Ascending aorta (tissue), 2 donors: ENCODE measurements at regions of chr7 and their contacts with region 1.

Region 1: DNA sequence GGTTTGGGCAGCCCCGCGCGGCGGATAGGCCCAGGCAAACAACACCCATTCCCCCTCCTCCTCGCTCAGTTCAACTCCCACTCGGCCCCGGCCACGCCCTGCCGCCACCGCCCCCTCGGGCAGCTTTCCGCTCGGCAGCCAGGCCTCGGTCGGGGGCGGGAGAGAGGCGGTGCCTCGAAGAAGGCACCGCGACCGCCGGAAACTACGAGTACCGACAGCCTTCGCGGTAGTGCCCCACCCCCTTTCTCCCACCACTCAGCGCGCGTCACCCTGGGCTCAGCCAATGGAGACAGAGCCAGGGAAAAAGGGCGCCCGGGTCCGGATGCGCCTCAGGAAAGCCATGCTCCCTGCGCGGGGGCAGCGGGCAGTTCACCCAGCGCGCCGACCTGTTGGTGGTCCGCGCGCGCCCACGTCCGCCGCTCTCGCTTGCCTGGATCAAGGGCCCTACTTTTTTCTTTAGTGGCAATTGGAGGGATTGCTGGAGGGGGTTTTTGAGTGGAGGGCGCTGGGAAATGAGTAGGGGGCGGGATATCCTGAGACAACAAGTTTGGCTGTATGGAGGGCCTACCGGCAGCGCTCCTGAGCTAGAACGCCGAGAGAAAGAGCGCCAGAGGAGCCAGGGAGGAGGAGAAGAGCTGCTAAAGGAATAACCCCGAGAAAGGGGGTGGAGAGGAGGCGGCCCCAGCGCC is 557 bp upstream of the SP4 start:
- DNase-seq: peak; percentile 95 to 99
- H3K4me3 ChIP-seq: peak overlapping the region; percentile 55 to 87
- H3K27ac ChIP-seq: peak overlapping the region; percentile 97 to 98
- H3K4me1 ChIP-seq: peaks cover 0 to 6% of the 10 kb centered on the region in 2 donors
- H3K27me3 ChIP-seq: no peaks in the 10 kb centered on the region
- CTCF ChIP-seq: peak in 2 of 3 experiments; percentile 4 to 8

Region 2: DNA sequence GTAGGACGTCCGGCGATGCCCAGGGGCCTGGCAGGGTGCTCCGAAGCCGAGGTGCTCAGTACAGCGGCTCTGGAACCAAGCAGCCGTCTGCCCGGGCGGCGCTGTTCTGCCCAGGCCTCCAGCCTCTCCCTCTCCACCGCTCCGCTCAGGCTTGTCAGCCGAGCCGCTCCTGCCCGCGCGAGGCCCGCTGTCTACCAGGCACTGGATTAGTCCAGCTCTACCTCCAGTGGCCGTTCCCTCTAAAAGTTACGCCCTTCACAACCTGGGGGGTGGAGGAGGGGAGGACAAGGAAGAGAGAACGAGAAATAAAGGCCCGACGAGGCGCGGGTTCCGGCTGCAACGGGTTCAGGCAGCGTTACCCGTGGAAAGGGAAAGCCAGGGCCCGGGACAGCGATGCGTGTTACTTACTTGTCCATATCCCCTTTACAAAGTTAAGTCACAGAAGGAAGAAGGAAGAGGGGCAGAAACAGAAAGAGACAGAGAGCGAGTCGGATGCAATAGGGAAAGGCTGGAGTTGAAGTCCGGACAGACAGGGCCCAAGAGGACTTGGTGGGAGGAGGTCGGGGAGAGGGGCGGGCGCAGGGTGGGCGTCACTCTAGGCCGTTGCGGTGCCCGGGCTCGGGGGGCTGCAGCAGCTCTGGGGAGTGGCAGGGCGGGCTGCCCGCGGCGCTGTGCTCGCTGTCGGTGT is 643.5 kb before region 1 on chr7:
- intact Hi-C with region 1: loop called (anchors 5 kb)
- DNase-seq: no peak
- H3K4me3 ChIP-seq: peak overlapping the region; percentile 43 to 57
- H3K27ac ChIP-seq: no peak overlapping the region
- H3K4me1 ChIP-seq: peaks cover 4 to 12% of the 10 kb centered on the region in 2 donors
- H3K27me3 ChIP-seq: peaks cover 45% of the 10 kb centered on the region
- CTCF ChIP-seq: no peak

Region 3: GRCh38 chr7:22082886-22083703 is 655.8 kb after region 1 on chr7:
- intact Hi-C with region 1: loop called (anchors 1 kb)
- DNase-seq: peak; percentile 51 to 95
- H3K4me3 ChIP-seq: peak overlapping the region; percentile 65 to 68
- H3K27ac ChIP-seq: peak overlapping the region; percentile 74 to 81
- H3K4me1 ChIP-seq: peaks cover 0 to 3% of the 10 kb centered on the region in 2 donors
- H3K27me3 ChIP-seq: no peaks in the 10 kb centered on the region
- CTCF ChIP-seq: peak; percentile 94 to 98 (median 97)

Region 4: DNA sequence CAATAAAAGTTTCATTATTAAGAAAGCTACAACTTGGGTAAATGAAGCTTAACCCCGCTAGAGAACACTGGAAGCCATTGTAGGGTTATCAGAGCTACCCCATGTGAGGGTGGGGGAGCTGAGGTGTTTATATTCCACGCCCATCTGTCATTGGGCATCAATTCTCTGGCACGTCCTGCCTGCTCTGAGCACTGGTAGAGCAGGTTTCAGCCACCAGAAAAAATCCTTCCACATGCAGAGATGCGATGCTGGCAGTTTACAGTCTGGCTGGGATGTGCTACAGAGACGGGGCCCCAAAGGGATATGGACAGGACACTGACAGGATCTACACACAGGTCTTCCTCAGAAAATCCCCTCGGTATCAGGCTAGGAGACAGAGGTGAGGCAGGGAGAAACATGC is 945.5 kb after region 1 on chr7:
- intact Hi-C with region 1: no loop called
- DNase-seq: no peak
- H3K4me3 ChIP-seq: no peak overlapping the region
- H3K27ac ChIP-seq: no peak overlapping the region
- H3K4me1 ChIP-seq: no peaks in the 10 kb centered on the region
- H3K27me3 ChIP-seq: no peaks in the 10 kb centered on the region
- CTCF ChIP-seq: no peak

Region 5: GRCh38 chr7:22726345-22727185 is 1299.2 kb after region 1 on chr7:
- intact Hi-C with region 1: loop called (anchors 10 kb)
- DNase-seq: peak in 1 of 2 donors; percentile 83
- H3K4me3 ChIP-seq: peak overlapping the region; percentile 57 to 61
- H3K27ac ChIP-seq: peak overlapping the region; percentile 60 to 83
- H3K4me1 ChIP-seq: peaks cover 5 to 36% of the 10 kb centered on the region in 2 donors
- H3K27me3 ChIP-seq: no peaks in the 10 kb centered on the region
- CTCF ChIP-seq: peak; percentile 21 to 55 (median 46)

Region 6: GRCh38 chr7:23298885-23299769 is 1871.8 kb after region 1 on chr7 and contains the start of gene MALSU1:
- intact Hi-C with region 1: loop called (anchors 2 kb)
- DNase-seq: peak; percentile 79 to 99
- H3K4me3 ChIP-seq: peak within 1 kb of the TSS; percentile 78 to 91
- H3K27ac ChIP-seq: peak within 1 kb of the TSS; percentile 75 to 79
- H3K4me1 ChIP-seq: peaks cover 8 to 17% of the 10 kb centered on the region in 2 donors
- H3K27me3 ChIP-seq: no peaks in the 10 kb centered on the region
- CTCF ChIP-seq: no peak
- total RNA-seq, gene MALSU1: 22.4 TPM